ENCODE measurements at regions of chr22 and their contacts with region 1.

Region 1: GRCh38 chr22:31080848-31081649 is at the start of gene SMTN:
- DNase-seq: peak; percentile 86
- ATAC-seq: peak; percentile 87
- H3K4me3 ChIP-seq: peak within 1 kb of the TSS; percentile 71 to 92 (median 89)
- H3K27ac ChIP-seq: peak within 1 kb of the TSS; percentile 74
- H3K4me1 ChIP-seq: peaks cover 47% of the 10 kb centered on the region
- H3K27me3 ChIP-seq: no peaks in the 10 kb centered on the region; a peak in 1 of 5 replicates
- CTCF ChIP-seq: no peak; the same call in 1 of the 2 replicates
- EP300 ChIP-seq: no peak
- POLR2A ChIP-seq: peak; percentile 77 to 93; a peak in 3 of 4 replicates
- RAD21 ChIP-seq: no peak
- total RNA-seq, gene SMTN: 6.9 and 14.7 TPM in 2 replicates

Region 2: GRCh38 chr22:30947816-30948454 is 133.1 kb before region 1 on chr22:
- CTCF ChIA-PET with region 1: interaction called, 7 read pairs
- POLR2A ChIA-PET with region 1: interaction called, 3 read pairs
- in situ Hi-C with region 1: no loop called
- intact Hi-C with region 1: loop called (anchors 5 kb)
- DNase-seq: peak; percentile 26
- ATAC-seq: no peak
- H3K4me3 ChIP-seq: no peak overlapping the region
- H3K27ac ChIP-seq: no peak overlapping the region
- H3K4me1 ChIP-seq: no peaks in the 10 kb centered on the region
- H3K27me3 ChIP-seq: no peaks in the 10 kb centered on the region
- CTCF ChIP-seq: peak; percentile 47
- EP300 ChIP-seq: no peak
- POLR2A ChIP-seq: no peak
- RAD21 ChIP-seq: 0 out of 2 replicates have a peak, but pooled peaks have one; percentile 42

Region 3: DNA sequence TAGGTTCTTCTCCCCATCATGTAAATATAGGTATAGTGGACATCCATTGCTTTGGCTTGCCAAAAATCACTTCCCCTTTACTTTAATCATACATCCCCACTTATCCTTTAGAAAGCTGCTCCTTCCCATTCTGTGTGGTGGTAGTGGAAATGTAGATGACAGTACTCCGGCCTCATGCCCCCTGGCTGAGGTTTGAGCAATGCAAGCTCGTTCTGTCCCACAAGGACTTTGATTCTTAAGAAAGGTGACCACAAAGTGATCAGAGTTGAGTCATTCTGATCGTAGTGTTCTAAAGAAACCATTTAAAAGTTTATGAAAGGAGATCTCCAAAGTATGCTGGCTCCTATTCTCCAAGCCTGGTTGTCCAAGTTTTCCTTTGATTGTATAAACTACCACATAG is 101.1 kb before region 1 on chr22:
- CTCF ChIA-PET with region 1: no interaction called
- POLR2A ChIA-PET with region 1: interaction called, 6 read pairs
- in situ Hi-C with region 1: no loop called
- intact Hi-C with region 1: loop called (anchors 5 kb)
- DNase-seq: no peak
- ATAC-seq: peak; percentile 57; the same call in 2 of the 3 replicates
- H3K4me3 ChIP-seq: no peak overlapping the region
- H3K27ac ChIP-seq: no peak overlapping the region
- H3K4me1 ChIP-seq: peaks cover 26% of the 10 kb centered on the region
- H3K27me3 ChIP-seq: no peaks in the 10 kb centered on the region
- CTCF ChIP-seq: no peak
- EP300 ChIP-seq: no peak
- POLR2A ChIP-seq: no peak
- RAD21 ChIP-seq: no peak

Region 4: DNA sequence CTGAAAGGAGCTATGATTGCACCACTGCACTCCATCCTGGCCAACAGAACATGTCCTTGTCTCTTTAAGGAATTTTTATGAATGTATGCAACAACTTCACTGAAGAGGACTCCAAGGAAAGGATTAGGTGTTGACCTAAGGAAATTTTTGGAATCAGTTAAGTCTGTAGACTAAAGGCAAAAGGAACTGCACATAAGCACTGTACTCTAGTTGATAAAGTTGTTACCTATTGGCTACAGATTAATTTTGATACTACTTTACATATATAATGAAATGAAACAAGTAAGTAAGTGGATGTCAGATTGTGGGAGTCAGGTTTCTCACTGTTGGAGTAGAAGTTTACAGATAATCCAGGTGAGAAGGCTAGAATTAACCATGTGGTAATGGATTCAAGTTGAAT is 75.5 kb before region 1 on chr22:
- CTCF ChIA-PET with region 1: no interaction called
- POLR2A ChIA-PET with region 1: no interaction called
- in situ Hi-C with region 1: no loop called
- intact Hi-C with region 1: no loop called
- DNase-seq: no peak
- ATAC-seq: no peak
- H3K4me3 ChIP-seq: no peak overlapping the region
- H3K27ac ChIP-seq: no peak overlapping the region
- H3K4me1 ChIP-seq: peaks cover 11% of the 10 kb centered on the region
- H3K27me3 ChIP-seq: no peaks in the 10 kb centered on the region
- CTCF ChIP-seq: no peak
- EP300 ChIP-seq: no peak
- POLR2A ChIP-seq: no peak
- RAD21 ChIP-seq: no peak

Region 5: GRCh38 chr22:31046539-31047226 is 34.4 kb before region 1 on chr22:
- CTCF ChIA-PET with region 1: no interaction called
- POLR2A ChIA-PET with region 1: interaction called, 11 read pairs
- in situ Hi-C with region 1: no loop called
- intact Hi-C with region 1: no loop called
- DNase-seq: peak; percentile 45
- ATAC-seq: peak; percentile 59; the same call in 2 of the 3 replicates
- H3K4me3 ChIP-seq: 0 out of 6 replicates have a peak overlapping the region, but pooled peaks of 1 of the 3 experiments have one; percentile 7
- H3K27ac ChIP-seq: peak overlapping the region; percentile 56
- H3K4me1 ChIP-seq: peaks cover 51% of the 10 kb centered on the region
- H3K27me3 ChIP-seq: no peaks in the 10 kb centered on the region
- CTCF ChIP-seq: no peak; the same call in 1 of the 2 replicates
- EP300 ChIP-seq: no peak; a peak in 1 of 4 replicates
- POLR2A ChIP-seq: no peak
- RAD21 ChIP-seq: no peak

Region 6: GRCh38 chr22:31055635-31056159 is 25.4 kb before region 1 on chr22:
- CTCF ChIA-PET with region 1: no interaction called
- POLR2A ChIA-PET with region 1: interaction called, 19 read pairs
- in situ Hi-C with region 1: no loop called
- intact Hi-C with region 1: no loop called
- DNase-seq: peak; percentile 98
- ATAC-seq: peak; percentile 98
- H3K4me3 ChIP-seq: peak overlapping the region in 1 of 3 experiments; percentile 32; a peak in 2 of 6 replicates
- H3K27ac ChIP-seq: peak overlapping the region; percentile 63
- H3K4me1 ChIP-seq: peaks cover 55% of the 10 kb centered on the region
- H3K27me3 ChIP-seq: no peaks in the 10 kb centered on the region
- CTCF ChIP-seq: no peak; the same call in 1 of the 2 replicates
- EP300 ChIP-seq: peak; percentile 95 to 96
- POLR2A ChIP-seq: no peak
- RAD21 ChIP-seq: peak; percentile 64

Region 7: DNA sequence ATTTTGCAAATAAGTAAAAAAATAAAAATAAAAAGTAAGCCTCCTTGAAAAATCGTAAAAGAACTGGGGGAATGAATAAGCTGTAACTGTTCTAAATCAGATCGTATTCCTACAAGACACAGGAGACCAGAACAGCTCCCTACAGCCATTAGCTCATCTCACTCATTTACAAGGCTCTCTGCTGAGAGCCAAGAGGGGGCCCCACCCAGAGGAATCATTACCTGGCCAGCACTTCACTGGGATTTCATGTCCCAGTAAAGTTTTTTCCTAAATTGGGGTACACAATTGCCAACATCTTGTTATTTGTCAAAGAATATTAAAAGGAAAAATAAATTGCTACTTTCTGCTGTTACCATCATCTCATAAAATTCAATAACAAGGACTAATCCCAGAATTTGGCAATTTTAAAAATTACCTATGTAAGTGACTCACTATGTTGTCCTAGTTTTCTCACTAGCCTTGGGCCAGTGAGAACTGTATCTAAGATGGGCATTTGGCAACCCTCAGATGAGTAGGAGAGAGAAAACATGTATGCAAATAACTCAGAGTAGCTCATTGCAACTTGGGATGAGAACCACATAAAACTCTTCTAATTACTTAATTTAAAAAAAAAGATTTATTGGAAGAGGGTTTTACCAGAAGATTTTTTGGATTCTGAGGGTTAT is 18.4 kb before region 1 on chr22:
- CTCF ChIA-PET with region 1: no interaction called
- POLR2A ChIA-PET with region 1: interaction called, 64 read pairs
- in situ Hi-C with region 1: no loop called
- intact Hi-C with region 1: no loop called
- DNase-seq: no peak
- ATAC-seq: no peak
- H3K4me3 ChIP-seq: no peak overlapping the region
- H3K27ac ChIP-seq: no peak overlapping the region
- H3K4me1 ChIP-seq: peaks cover 50% of the 10 kb centered on the region
- H3K27me3 ChIP-seq: no peaks in the 10 kb centered on the region
- CTCF ChIP-seq: no peak
- EP300 ChIP-seq: no peak
- POLR2A ChIP-seq: no peak
- RAD21 ChIP-seq: no peak

Region 8: GRCh38 chr22:31363885-31364465 is 282.9 kb after region 1 on chr22:
- CTCF ChIA-PET with region 1: no interaction called
- POLR2A ChIA-PET with region 1: no interaction called
- in situ Hi-C with region 1: no loop called
- intact Hi-C with region 1: no loop called
- DNase-seq: no peak
- ATAC-seq: peak; percentile 61
- H3K4me3 ChIP-seq: no peak overlapping the region
- H3K27ac ChIP-seq: no peak overlapping the region
- H3K4me1 ChIP-seq: peaks cover 14% of the 10 kb centered on the region
- H3K27me3 ChIP-seq: no peaks in the 10 kb centered on the region
- CTCF ChIP-seq: no peak
- EP300 ChIP-seq: no peak
- POLR2A ChIP-seq: no peak
- RAD21 ChIP-seq: no peak

Measured in HepG2 (cell line).